ENCODE measurements at regions of chr20 and their contacts with region 1.

Region 1: DNA sequence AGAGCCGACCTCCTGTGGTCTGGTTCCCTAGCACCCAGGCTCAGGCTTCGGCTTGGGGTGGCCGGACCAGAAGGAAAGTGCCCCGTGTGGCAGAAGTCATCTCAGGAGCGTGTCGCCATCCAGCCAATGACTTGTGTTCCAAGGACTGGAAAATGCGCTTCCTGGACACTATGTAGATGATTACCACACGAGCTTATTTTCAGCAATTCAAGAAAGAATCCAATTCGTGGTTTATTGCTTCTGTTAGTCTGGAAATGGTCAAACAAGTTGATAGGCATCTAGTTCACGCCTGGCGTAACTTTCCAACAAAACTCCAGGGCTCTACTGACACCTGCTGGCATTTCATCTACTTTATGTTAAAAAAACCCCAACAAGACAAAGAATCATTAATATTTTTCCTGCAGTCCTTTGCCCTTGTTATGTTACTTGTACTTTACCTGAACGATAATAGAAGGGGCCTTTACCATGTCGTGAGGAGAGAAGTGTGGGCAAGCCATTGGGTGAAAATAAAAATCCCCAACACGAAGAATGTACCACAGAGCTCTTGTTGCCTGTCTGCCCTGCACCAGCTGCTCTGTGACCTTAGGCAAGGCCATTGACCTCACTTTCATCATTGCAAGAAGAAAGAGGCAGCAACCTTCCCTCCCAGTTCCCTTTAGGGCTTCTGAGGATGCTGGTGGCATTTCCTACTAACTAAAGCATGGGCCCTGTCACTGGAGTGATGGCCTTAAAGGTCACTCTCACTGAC is 154.7 kb upstream of the LAMP5 start:
- DNase-seq: no peak
- H3K4me3 Mint-ChIP-seq: no peak overlapping the region
- H3K27ac Mint-ChIP-seq: no peak overlapping the region
- H3K4me1 Mint-ChIP-seq: no peaks in the 10 kb centered on the region
- H3K27me3 Mint-ChIP-seq: no peaks in the 10 kb centered on the region

Region 2: DNA sequence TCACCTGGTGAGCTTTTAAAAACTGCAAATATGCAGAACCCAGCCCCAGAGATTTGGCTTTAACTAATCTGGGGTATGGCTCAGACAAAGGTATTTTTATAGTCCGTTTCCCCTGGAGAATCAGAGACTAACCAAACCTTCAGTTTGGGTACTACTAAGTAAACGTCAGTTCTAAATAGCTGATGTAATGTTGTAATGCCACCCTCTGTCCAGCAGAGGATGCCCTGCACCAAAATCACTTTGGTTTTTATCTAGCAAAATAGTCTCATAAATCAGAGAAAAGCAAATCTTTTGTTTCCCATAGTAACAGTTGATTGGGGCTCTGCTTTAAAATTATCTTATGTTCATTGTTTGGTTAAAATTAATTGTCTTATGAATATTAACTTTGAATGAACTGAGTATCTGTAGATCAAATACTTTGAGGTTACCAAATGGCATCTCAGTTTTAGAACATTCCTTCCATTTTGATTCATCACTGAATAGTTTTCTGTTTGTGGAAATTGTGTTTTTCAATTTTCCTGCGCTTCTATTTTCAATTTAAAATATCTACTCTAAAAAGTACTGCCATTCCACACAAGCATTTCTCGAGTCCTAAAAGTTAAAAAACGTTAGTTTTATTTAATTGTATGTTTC is 569.2 kb before region 1 on chr20:
- CTCF ChIA-PET with region 1: interaction called, 3 read pairs
- intact Hi-C with region 1: loop called (anchors 1 kb)
- DNase-seq: peak; percentile 35
- H3K4me3 Mint-ChIP-seq: no peak overlapping the region
- H3K27ac Mint-ChIP-seq: no peak overlapping the region
- H3K4me1 Mint-ChIP-seq: no peaks in the 10 kb centered on the region
- H3K27me3 Mint-ChIP-seq: no peaks in the 10 kb centered on the region

Region 3: DNA sequence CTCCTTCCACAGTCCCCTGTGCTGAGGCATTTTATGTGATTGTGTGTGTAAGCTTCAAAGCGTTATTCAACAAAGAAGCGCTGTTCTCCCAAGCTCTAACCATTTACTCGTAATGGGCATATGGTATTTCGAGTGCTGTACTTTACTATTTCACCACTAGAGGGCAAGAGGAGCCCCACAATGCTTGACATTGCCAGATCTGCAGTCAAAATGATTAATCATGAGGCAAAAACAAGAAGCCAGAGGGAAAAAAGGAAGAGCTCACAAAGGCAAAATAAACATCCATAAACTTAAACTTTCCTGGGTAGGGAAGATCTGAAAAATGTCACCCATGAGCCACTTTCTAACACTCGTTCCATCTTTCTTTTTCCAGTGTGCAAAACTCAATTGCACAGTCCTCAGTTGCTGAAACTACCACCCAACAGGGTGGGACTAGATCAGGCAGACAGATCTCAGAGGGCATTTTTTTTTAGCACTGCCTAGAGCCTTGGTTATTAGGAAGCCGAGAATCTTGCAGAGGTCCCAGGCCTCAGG is 505.9 kb before region 1 on chr20:
- CTCF ChIA-PET with region 1: no interaction called
- intact Hi-C with region 1: loop called (anchors 1 kb)
- DNase-seq: peak; percentile 6
- H3K4me3 Mint-ChIP-seq: no peak overlapping the region
- H3K27ac Mint-ChIP-seq: no peak overlapping the region
- H3K4me1 Mint-ChIP-seq: no peaks in the 10 kb centered on the region
- H3K27me3 Mint-ChIP-seq: no peaks in the 10 kb centered on the region

Region 4: GRCh38 chr20:9332783-9333479 is 26.8 kb before region 1 on chr20:
- CTCF ChIA-PET with region 1: no interaction called
- intact Hi-C with region 1: no loop called
- DNase-seq: no peak
- H3K4me3 Mint-ChIP-seq: no peak overlapping the region
- H3K27ac Mint-ChIP-seq: no peak overlapping the region
- H3K4me1 Mint-ChIP-seq: no peaks in the 10 kb centered on the region
- H3K27me3 Mint-ChIP-seq: no peaks in the 10 kb centered on the region

Region 5: DNA sequence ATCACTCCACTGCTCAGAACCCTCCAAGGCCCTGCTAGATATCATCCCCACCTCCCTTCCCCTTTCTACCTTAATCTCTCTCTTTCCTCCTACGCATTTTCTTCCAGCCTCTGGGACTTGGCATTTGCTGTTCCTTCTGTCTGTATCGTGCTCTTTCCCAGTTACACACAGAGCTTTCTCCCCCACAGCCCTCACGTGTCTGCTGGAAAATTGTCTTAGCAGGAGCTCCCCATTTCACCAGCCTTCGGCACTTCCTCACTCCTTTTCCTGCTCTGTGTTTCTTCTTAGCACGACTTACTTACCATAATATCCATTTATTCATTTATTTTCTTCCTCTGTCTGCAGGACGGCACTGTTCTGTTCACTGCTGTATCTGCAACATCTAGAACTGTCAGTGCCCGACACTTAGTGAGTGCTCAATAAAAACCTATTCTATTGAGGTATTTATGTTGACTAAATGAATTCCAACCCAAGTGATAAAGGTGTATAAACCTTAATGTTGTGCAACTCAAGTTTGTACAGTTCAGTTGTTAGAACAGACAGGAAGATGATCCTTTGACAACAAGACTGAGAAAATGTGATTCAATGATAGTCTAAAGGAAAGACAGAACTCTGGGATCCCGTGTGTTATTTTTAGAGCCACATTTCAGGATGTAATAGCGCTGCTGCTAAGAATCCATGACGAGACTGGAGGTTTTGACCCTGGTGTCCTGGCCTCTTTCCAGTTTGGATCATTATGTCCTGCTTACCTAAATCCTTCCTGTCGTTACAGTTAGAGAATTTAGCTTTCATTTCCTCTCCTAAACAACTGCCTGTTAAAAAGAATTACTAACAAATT is 15.4 kb before region 1 on chr20:
- CTCF ChIA-PET with region 1: no interaction called
- intact Hi-C with region 1: no loop called
- DNase-seq: no peak
- H3K4me3 Mint-ChIP-seq: no peak overlapping the region
- H3K27ac Mint-ChIP-seq: no peak overlapping the region
- H3K4me1 Mint-ChIP-seq: no peaks in the 10 kb centered on the region
- H3K27me3 Mint-ChIP-seq: no peaks in the 10 kb centered on the region

Region 6: DNA sequence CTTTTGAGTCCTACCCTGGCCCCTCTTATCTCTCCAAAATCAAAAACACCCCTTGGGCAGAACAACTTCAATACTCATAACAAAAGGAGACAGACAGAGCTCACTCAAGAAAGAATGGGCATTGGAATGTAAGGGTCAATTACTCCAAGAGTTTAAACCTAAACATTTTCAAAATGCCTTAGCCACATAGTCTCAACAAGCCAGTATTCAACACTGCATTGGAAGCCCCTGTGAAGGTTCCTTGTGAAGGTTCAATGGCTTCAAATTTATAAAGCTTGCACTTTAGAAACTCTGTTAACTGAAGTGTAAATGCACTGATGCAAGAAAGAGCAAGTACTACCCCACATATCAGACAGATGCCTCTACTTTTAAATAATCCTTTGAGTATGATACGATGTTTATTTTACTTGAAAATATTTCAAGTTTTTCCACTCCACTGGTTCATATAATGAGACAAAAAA is 15.5 kb after region 1 on chr20:
- CTCF ChIA-PET with region 1: no interaction called
- intact Hi-C with region 1: no loop called
- DNase-seq: no peak
- H3K4me3 Mint-ChIP-seq: no peak overlapping the region
- H3K27ac Mint-ChIP-seq: no peak overlapping the region
- H3K4me1 Mint-ChIP-seq: no peaks in the 10 kb centered on the region
- H3K27me3 Mint-ChIP-seq: no peaks in the 10 kb centered on the region